HAP-1 (cell line): ENCODE measurements at regions of chr16 and their contacts with region 1.

Region 1: GRCh38 chr16:70568601-70569237 is 45.1 kb downstream of the SF3B3 start:
- DNase-seq: no peak
- H3K4me3 ChIP-seq: no peak overlapping the region
- H3K4me1 ChIP-seq: no peaks in the 10 kb centered on the region
- H3K27me3 ChIP-seq: no peaks in the 10 kb centered on the region

Region 2: DNA sequence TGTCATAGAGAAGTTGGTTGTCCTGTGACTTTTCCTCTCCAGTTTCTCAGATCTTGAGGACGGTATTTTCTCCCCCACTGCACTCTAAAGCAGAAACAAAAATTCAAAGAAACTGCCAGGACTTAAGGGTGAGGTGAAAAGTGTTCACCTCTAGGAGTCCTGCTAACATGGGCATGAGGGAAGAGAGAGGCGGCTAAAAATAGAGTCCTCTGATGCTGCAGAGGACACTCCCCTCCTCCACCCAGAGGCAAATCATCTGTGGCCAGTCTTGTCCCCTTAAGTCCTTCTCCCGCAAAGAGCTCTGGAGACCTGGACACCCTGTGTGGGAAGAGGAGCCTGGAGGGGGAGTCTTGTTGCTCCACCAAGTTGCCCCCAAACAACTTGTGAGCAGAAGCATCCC is 226.7 kb before region 1 on chr16:
- in situ Hi-C with region 1: no loop called
- DNase-seq: no peak
- H3K4me3 ChIP-seq: no peak overlapping the region
- H3K4me1 ChIP-seq: peaks cover 7% of the 10 kb centered on the region
- H3K27me3 ChIP-seq: no peaks in the 10 kb centered on the region

Region 3: DNA sequence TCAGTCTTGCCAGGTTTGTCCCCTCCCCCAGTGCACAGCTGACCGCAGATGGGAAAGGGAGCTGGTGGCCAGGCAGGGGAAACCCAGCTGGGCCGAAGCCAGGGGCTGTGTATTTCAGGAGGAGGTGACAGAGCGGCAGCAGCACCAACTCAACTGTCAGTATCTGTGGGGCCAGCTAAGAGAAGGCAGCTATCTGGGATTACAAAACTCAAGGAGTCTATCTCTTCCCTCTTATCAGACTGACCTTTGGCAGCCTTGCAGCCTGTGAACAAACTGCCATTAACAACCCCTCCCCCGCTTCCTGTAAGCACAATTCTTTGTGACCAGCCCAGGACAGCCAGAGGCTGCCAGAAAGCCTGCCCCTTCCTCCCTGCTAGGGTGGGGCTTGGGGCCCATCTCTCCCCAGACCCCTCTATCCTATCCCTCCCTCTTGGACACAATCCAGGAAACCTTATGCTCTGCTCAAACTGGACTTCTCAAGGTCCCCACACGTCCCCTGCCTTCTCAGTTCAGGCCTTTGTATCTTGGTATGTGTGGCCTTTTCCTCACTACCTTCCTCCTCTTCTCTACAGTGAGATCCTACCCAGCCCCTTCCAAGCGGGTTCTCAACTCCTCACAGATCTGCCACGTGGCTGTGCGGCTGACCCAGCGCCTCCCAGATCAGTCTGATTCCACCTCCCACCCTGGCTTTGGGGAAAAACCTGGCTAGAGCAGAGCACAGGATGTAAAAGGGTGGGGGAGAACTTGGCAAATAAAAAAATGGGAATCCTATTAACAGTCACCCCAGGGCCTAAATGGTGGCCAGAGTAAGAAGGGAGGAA is 140.3 kb before region 1 on chr16:
- in situ Hi-C with region 1: no loop called
- DNase-seq: peak; percentile 48 to 79
- H3K4me3 ChIP-seq: no peak overlapping the region
- H3K4me1 ChIP-seq: peaks cover 23% of the 10 kb centered on the region
- H3K27me3 ChIP-seq: no peaks in the 10 kb centered on the region

Region 4: DNA sequence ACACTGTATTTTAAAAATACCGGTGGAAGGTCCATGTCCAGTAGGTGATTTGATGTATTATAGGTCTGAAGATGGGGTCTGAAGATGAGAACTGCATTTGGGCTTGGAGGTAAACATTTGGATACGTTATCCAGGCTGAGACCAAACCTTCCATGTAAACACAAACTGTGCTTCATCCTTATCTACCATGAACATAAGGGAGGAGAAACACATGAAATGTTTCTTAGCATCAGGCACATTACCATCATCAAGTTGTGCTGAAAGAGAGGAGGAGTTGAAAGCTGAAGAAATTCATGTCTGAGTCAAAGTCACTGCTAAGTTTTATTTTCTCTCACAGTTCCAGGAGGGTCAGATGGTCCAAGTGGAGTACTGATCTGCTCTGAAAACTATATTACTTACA is 33.7 kb before region 1 on chr16:
- in situ Hi-C with region 1: loop called (anchors 5 kb)
- DNase-seq: peak in 1 of 2 experiments; percentile 2
- H3K4me3 ChIP-seq: no peak overlapping the region
- H3K4me1 ChIP-seq: no peaks in the 10 kb centered on the region
- H3K27me3 ChIP-seq: no peaks in the 10 kb centered on the region

Region 5: GRCh38 chr16:70653809-70654771 is 85.4 kb after region 1 on chr16:
- in situ Hi-C with region 1: no loop called
- DNase-seq: peak; percentile 70 to 88
- H3K4me3 ChIP-seq: no peak overlapping the region
- H3K4me1 ChIP-seq: no peaks in the 10 kb centered on the region; the same call in 1 of the 2 replicates
- H3K27me3 ChIP-seq: no peaks in the 10 kb centered on the region